ENCODE measurements at regions of chr14 and their contacts with region 1.

Region 1: GRCh38 chr14:32998433-32998832 is 59.8 kb downstream of the NPAS3 start:
- DNase-seq: peak; percentile 29

Region 2: GRCh38 chr14:32576088-32576795 is 422.2 kb before region 1 on chr14:
- in situ Hi-C with region 1: loop called (anchors 25 kb)
- DNase-seq: peak; percentile 55

Region 3: DNA sequence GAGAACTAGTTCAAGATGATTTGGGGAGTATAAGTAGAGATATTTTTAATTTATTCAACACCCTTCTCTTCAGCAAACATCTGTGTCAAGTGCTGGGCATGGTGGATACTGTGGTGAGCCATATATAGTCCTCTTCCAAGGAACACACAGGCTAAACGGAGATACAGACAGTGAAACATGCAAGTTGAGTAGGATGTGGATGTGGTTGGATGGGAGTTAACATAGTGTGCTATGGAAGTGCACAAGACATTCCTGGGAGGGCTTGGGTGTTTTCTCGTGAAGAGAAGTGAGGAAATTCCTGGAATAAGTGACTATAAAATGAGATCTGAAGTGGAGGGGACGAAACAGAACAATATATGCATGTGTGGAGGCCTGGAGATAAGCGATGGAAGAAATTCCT is 240.9 kb before region 1 on chr14:
- in situ Hi-C with region 1: no loop called
- DNase-seq: no peak